Psoas muscle (tissue), 8 donors: ENCODE measurements at regions of chr2 and their contacts with region 1.

Region 1: GRCh38 chr2:198296665-198297308 is 492.4 kb downstream of the PLCL1 start:
- DNase-seq: peak in 1 of 2 donors; percentile 28
- ATAC-seq: peak; percentile 63 to 87 (median 74)
- H3K4me3 ChIP-seq: no peak overlapping the region
- H3K27ac ChIP-seq: no peak overlapping the region
- H3K4me1 ChIP-seq: no peaks in the 10 kb centered on the region
- H3K27me3 ChIP-seq: peaks cover 0 to 2% (median 0%) of the 10 kb centered on the region in 3 donors
- CTCF ChIP-seq: peak; percentile 85

Region 2: GRCh38 chr2:197705121-197705911 is 591.5 kb before region 1 on chr2 and contains the start of gene MARS2:
- intact Hi-C with region 1: loop called in 1 of 2 experiments (anchors 2 kb)
- DNase-seq: peak; percentile 96 to 97
- ATAC-seq: peak; percentile 94 to 98 (median 96)
- H3K4me3 ChIP-seq: peak within 1 kb of the TSS; percentile 97
- H3K27ac ChIP-seq: peak within 1 kb of the TSS; percentile 90
- H3K4me1 ChIP-seq: peaks cover 22% of the 10 kb centered on the region
- H3K27me3 ChIP-seq: no peaks in the 10 kb centered on the region
- CTCF ChIP-seq: no peak
- total RNA-seq, gene MARS2: 5.9 to 12.6 (median 7.3) TPM

Region 3: DNA sequence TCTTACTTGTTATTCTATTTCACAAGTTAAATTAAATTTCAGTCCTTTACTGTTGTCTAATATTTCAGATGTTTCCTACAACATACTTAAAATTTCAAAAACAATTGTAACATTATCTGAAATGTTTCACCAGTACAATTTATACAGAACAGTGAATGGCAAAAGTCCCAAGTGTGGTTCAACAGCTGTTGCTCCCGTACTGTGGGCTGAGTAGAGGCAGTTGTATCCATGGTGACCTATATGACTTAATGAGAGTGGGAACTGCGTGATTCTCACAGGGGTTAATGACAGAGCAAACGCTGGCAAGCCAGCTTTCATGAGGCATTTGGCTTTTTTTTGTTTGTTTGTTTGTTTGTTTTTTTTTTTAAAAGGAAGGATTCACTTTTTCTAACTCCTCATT is 497.7 kb before region 1 on chr2:
- intact Hi-C with region 1: loop called (anchors 2 to 5 kb)
- DNase-seq: no peak
- ATAC-seq: peak; percentile 36 to 64 (median 54)
- H3K4me3 ChIP-seq: no peak overlapping the region
- H3K27ac ChIP-seq: peak overlapping the region; percentile 82
- H3K4me1 ChIP-seq: peaks cover 19% of the 10 kb centered on the region
- H3K27me3 ChIP-seq: no peaks in the 10 kb centered on the region
- CTCF ChIP-seq: no peak

Region 4: GRCh38 chr2:197804049-197804757 is 492.6 kb before region 1 on chr2 and contains the start of gene PLCL1:
- intact Hi-C with region 1: loop called (anchors 2 to 5 kb)
- DNase-seq: peak; percentile 92 to 97
- ATAC-seq: peak; percentile 92 to 99 (median 96)
- H3K4me3 ChIP-seq: peak within 1 kb of the TSS; percentile 87
- H3K27ac ChIP-seq: peak within 1 kb of the TSS; percentile 82
- H3K4me1 ChIP-seq: peaks cover 45% of the 10 kb centered on the region
- H3K27me3 ChIP-seq: no peaks in the 10 kb centered on the region
- CTCF ChIP-seq: peak; percentile 6
- total RNA-seq, gene PLCL1: 9.6 to 25.4 (median 17.3) TPM

Region 5: DNA sequence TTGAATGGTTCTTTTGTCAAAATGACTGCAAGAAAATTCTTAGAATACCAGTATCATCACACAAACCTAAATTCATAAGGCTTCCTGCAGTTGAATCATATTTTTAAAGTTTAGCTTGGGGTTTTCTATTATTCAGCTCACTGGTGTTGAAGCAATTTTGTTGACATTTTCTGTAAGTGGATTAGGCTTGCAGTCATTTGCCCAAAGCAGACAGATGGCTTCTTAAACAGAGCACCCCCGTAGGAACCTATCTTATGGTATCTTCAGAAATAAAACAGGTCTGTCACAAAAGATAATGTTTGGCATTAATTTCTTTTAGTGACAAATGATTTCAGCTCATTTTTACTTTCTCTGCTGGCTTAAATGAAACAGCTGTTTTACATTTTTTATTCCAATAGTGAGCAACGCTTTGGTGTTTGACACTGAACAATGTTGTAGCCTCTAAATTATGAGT is 161.3 kb before region 1 on chr2:
- intact Hi-C with region 1: loop called in 1 of 2 experiments (anchors 10 kb)
- DNase-seq: no peak
- ATAC-seq: no peak
- H3K4me3 ChIP-seq: no peak overlapping the region
- H3K27ac ChIP-seq: no peak overlapping the region
- H3K4me1 ChIP-seq: no peaks in the 10 kb centered on the region
- H3K27me3 ChIP-seq: no peaks in the 10 kb centered on the region
- CTCF ChIP-seq: no peak

Region 6: DNA sequence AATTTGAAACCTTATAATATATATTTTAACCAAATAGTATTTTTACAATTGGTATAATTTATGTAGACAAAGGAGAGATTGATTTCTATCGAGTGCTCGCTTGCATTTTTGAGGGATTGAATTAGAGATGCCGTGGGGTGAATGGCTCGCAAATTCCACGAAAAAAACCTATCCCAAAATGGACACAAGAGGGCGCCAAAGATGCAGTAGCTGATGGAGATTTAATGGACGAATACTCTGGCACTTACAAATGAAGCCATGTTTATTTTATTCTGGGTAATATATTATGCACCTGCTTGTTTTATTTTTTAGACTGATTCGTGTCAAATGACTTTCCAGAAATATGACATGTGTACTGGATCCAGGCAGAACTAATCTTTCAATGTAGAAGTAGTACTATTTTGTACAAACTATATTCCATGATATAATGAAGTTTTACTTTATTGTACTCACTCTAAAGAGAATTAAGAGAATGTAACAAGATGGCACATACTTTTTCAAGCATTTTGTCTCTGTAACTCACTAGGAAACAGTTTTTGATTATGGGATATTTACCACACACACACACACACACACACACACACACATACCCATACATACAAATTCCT is 13.0 kb after region 1 on chr2:
- intact Hi-C with region 1: no loop called
- DNase-seq: no peak
- ATAC-seq: peak in 2 of 4 donors; percentile 46 to 73
- H3K4me3 ChIP-seq: no peak overlapping the region
- H3K27ac ChIP-seq: no peak overlapping the region
- H3K4me1 ChIP-seq: no peaks in the 10 kb centered on the region
- H3K27me3 ChIP-seq: peaks cover 0 to 4% (median 0%) of the 10 kb centered on the region in 3 donors
- CTCF ChIP-seq: peak; percentile 80

Region 7: GRCh38 chr2:198383392-198383791 is 86.6 kb after region 1 on chr2:
- intact Hi-C with region 1: no loop called
- DNase-seq: no peak
- ATAC-seq: no peak
- H3K4me3 ChIP-seq: no peak overlapping the region
- H3K27ac ChIP-seq: no peak overlapping the region
- H3K4me1 ChIP-seq: no peaks in the 10 kb centered on the region
- H3K27me3 ChIP-seq: no peaks in the 10 kb centered on the region
- CTCF ChIP-seq: no peak